ENCODE measurements at regions of chr1 and their contacts with region 1.

Region 1: GRCh38 chr1:185670187-185670627 is 64.0 kb upstream of the HMCN1 start:
- DNase-seq: peak in 1 of 2 experiments; percentile 50
- ATAC-seq: peak; percentile 64 to 85; a peak in 5 of 6 replicates
- H3K4me3 ChIP-seq: no peak overlapping the region
- H3K27ac ChIP-seq: peak overlapping the region in 1 of 2 experiments; percentile 51; a peak in 1 of 6 replicates
- H3K4me1 ChIP-seq: peaks cover 10% of the 10 kb centered on the region
- CTCF ChIP-seq: peak; percentile 62
- EP300 ChIP-seq: no peak
- POLR2A ChIP-seq: no peak
- RAD21 ChIP-seq: peak; percentile 80 to 84

Region 2: GRCh38 chr1:185426848-185427247 is 243.4 kb before region 1 on chr1:
- CTCF ChIA-PET with region 1: interaction called, 10 read pairs
- POLR2A ChIA-PET with region 1: no interaction called
- DNase-seq: no peak
- ATAC-seq: no peak
- H3K4me3 ChIP-seq: no peak overlapping the region
- H3K27ac ChIP-seq: no peak overlapping the region
- H3K4me1 ChIP-seq: no peaks in the 10 kb centered on the region
- CTCF ChIP-seq: no peak
- EP300 ChIP-seq: no peak
- POLR2A ChIP-seq: no peak
- RAD21 ChIP-seq: 0 out of 5 replicates have a peak, but pooled peaks have one; percentile 4 to 13

Region 3: GRCh38 chr1:185646202-185646683 is 24.0 kb before region 1 on chr1:
- CTCF ChIA-PET with region 1: interaction called, 10 read pairs
- POLR2A ChIA-PET with region 1: no interaction called
- DNase-seq: peak; percentile 68 to 96
- ATAC-seq: peak; percentile 96 to 98
- H3K4me3 ChIP-seq: peak overlapping the region; percentile 14; the same call in 1 of the 3 replicates
- H3K27ac ChIP-seq: peak overlapping the region; percentile 70 to 80
- H3K4me1 ChIP-seq: peaks cover 36% of the 10 kb centered on the region
- CTCF ChIP-seq: no peak
- EP300 ChIP-seq: peak; percentile 84 to 88; a peak in 4 of 5 replicates
- POLR2A ChIP-seq: no peak
- RAD21 ChIP-seq: peak in 1 of 2 experiments; percentile 60; a peak in 4 of 5 replicates

Region 4: GRCh38 chr1:185652348-185652747 is 17.9 kb before region 1 on chr1:
- CTCF ChIA-PET with region 1: interaction called, 10 read pairs
- POLR2A ChIA-PET with region 1: no interaction called
- DNase-seq: peak in 1 of 2 experiments; percentile 53
- ATAC-seq: peak in 1 of 2 experiments; percentile 65; a peak in 2 of 6 replicates
- H3K4me3 ChIP-seq: no peak overlapping the region
- H3K27ac ChIP-seq: no peak overlapping the region
- H3K4me1 ChIP-seq: peaks cover 20% of the 10 kb centered on the region
- CTCF ChIP-seq: 0 out of 3 replicates have a peak, but pooled peaks have one; percentile 21
- EP300 ChIP-seq: no peak
- POLR2A ChIP-seq: no peak
- RAD21 ChIP-seq: peak in 1 of 2 experiments; percentile 53; a peak in 2 of 5 replicates

Region 5: DNA sequence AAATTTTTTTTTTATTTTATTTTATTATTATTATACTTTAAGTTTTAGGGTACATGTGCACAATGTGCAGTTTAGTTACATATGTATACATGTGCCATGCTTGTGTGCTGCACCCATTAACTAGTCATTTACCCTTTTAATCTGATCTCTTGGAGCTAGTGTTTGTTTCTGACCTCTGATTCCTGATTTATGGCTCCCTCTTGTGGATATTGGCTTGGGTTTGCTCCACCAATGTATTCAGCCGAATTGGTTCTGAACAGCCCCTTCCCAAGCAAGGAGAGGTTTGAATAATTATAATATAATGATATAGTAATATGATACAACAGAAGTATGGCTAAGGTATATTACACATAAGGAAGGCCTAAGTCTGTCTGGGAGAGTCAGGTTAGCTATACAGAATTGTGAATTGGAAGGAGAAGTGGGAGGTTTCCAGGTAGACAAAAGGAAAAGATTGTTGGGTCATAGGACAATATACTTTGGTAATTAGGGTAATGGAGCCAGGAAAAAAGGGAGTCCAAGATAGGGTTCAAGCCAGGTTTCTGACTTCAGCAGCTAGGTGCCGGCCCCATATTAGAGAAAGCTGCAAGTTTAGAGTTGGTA is 10.9 kb after region 1 on chr1:
- CTCF ChIA-PET with region 1: interaction called, 22 read pairs
- POLR2A ChIA-PET with region 1: no interaction called
- DNase-seq: peak; percentile 21 to 56
- ATAC-seq: peak; percentile 77 to 86; a peak in 4 of 6 replicates
- H3K4me3 ChIP-seq: no peak overlapping the region
- H3K27ac ChIP-seq: no peak overlapping the region
- H3K4me1 ChIP-seq: no peaks in the 10 kb centered on the region
- CTCF ChIP-seq: peak; percentile 77
- EP300 ChIP-seq: no peak
- POLR2A ChIP-seq: no peak
- RAD21 ChIP-seq: peak; percentile 86 to 87

Measured in A549 (cell line).